Activated CD4-positive, alpha-beta memory T cell treated with anti-CD3 and anti-CD28 coated beads, Interleukin-2, amount 10 ng/mL, durations not matched to agents 7 days and 5 days (primary cell): ENCODE measurements at regions of chr7 and their contacts with region 1.

Region 1: GRCh38 chr7:38215735-38216670 is 38.0 kb downstream of the STARD3NL start:
- DNase-seq: peak; percentile 84
- H3K4me3 Mint-ChIP-seq: no peak overlapping the region
- H3K27ac Mint-ChIP-seq: no peak overlapping the region
- H3K4me1 Mint-ChIP-seq: peaks cover 49% of the 10 kb centered on the region
- H3K27me3 Mint-ChIP-seq: no peaks in the 10 kb centered on the region

Region 2: DNA sequence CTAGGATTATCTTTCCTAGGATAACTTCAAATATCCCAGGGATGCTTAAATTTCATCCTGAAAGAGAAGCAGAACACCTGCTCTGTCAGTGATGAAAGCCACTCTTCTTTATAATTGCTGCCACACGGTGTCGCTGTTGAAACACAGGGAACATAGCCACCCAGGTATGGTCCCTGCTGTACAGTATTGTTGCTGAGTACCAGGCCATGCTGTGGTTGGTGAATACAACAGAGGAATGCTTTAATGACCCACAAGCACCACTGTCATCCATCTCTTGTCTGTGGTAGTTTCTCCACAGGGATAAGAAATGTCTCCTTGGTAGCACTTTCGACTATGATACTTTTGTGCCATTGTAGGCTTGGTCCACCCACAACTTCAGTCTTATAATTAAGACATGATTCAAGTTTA is 108.5 kb before region 1 on chr7:
- CTCF ChIA-PET with region 1: interaction called, 97 read pairs
- POLR2A ChIA-PET with region 1: no interaction called
- DNase-seq: peak; percentile 69
- H3K4me3 Mint-ChIP-seq: no peak overlapping the region
- H3K27ac Mint-ChIP-seq: no peak overlapping the region
- H3K4me1 Mint-ChIP-seq: no peaks in the 10 kb centered on the region
- H3K27me3 Mint-ChIP-seq: peaks cover 27% of the 10 kb centered on the region

Region 3: GRCh38 chr7:38195804-38196595 is 20.0 kb before region 1 on chr7:
- CTCF ChIA-PET with region 1: interaction called, 40 read pairs
- POLR2A ChIA-PET with region 1: no interaction called
- DNase-seq: no peak
- H3K4me3 Mint-ChIP-seq: no peak overlapping the region
- H3K27ac Mint-ChIP-seq: no peak overlapping the region
- H3K4me1 Mint-ChIP-seq: peaks cover 6% of the 10 kb centered on the region
- H3K27me3 Mint-ChIP-seq: no peaks in the 10 kb centered on the region

Region 4: DNA sequence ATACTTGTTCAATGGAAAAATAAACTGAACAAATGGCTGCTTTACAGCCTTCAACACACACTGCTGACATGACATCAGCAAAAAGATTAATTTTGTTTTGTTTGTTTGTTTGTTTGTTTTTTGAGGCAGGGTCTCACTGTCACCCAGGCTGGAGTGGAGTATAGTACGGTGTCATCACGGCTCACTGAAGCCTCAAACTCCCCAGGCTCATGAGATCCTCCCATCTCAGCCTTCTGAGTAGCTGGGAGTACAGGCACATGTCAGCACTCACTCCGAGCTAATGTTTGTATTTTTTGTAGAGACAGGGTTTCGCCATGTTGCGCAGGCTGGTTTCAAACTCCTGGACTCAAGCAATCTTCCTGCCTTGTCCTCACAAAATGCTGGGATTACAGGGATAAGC is 46.5 kb after region 1 on chr7:
- CTCF ChIA-PET with region 1: no interaction called
- POLR2A ChIA-PET with region 1: no interaction called
- DNase-seq: no peak
- H3K4me3 Mint-ChIP-seq: no peak overlapping the region
- H3K27ac Mint-ChIP-seq: no peak overlapping the region
- H3K4me1 Mint-ChIP-seq: peaks cover 3% of the 10 kb centered on the region
- H3K27me3 Mint-ChIP-seq: no peaks in the 10 kb centered on the region

Region 5: GRCh38 chr7:38318803-38319416 is 102.9 kb after region 1 on chr7:
- CTCF ChIA-PET with region 1: interaction called, 82 read pairs
- POLR2A ChIA-PET with region 1: interaction called, 3 read pairs
- DNase-seq: no peak
- H3K4me3 Mint-ChIP-seq: peak overlapping the region; percentile 64
- H3K27ac Mint-ChIP-seq: peak overlapping the region; percentile 81
- H3K4me1 Mint-ChIP-seq: peaks cover 41% of the 10 kb centered on the region
- H3K27me3 Mint-ChIP-seq: no peaks in the 10 kb centered on the region

Region 6: GRCh38 chr7:38351601-38352000 is 135.6 kb after region 1 on chr7:
- CTCF ChIA-PET with region 1: interaction called, 90 read pairs
- POLR2A ChIA-PET with region 1: interaction called, 4 read pairs
- DNase-seq: no peak
- H3K4me3 Mint-ChIP-seq: peak overlapping the region; percentile 41
- H3K27ac Mint-ChIP-seq: no peak overlapping the region
- H3K4me1 Mint-ChIP-seq: peaks cover 28% of the 10 kb centered on the region
- H3K27me3 Mint-ChIP-seq: no peaks in the 10 kb centered on the region

Region 7: GRCh38 chr7:38463277-38464225 is 247.5 kb after region 1 on chr7:
- CTCF ChIA-PET with region 1: no interaction called
- POLR2A ChIA-PET with region 1: no interaction called
- DNase-seq: peak; percentile 81
- H3K4me3 Mint-ChIP-seq: peak overlapping the region; percentile 30
- H3K27ac Mint-ChIP-seq: peak overlapping the region; percentile 74
- H3K4me1 Mint-ChIP-seq: peaks cover 19% of the 10 kb centered on the region
- H3K27me3 Mint-ChIP-seq: no peaks in the 10 kb centered on the region